ENCODE measurements at regions of chr13 and their contacts with region 1.

Region 1: DNA sequence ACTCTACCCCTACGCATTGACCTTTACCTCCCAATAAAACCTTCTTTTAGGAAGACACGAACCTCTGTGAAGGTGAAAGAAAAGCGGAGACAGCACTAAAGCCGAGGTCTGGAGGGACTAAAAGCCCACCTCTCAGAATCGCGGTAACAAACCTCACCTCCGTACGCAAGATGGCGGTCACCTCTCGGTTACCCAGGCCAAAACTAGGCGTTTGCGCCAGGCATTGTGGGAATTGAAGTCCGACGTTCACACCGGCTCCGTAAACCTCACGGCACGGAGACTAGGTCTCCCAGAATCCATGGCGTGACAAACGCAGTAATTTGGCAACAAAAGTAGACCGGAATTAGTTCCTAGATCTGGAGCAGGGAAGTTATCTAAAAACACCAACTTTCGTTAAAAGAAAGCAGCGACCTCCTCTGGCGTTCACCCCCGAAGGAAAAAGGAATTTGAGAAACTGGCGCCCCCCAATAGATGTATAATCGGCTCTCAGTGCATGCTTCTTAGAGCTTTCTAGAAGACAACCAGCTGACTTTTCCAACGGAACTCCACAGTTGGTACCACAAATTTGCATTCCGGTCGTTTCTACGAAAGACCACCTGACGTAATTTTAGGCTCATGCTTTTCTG is at the start of gene N4BP2L2:
- DNase-seq: peak; percentile 82 to 97 (median 88)
- ATAC-seq: peak; percentile 96
- H3K4me3 ChIP-seq: peak within 1 kb of the TSS; percentile 81
- H3K4me3 Mint-ChIP-seq: peak within 1 kb of the TSS; percentile 100
- H3K27ac ChIP-seq: peak within 1 kb of the TSS; percentile 98
- H3K27ac Mint-ChIP-seq: peak within 1 kb of the TSS; percentile 100
- H3K4me1 ChIP-seq: peaks cover 18% of the 10 kb centered on the region
- H3K4me1 Mint-ChIP-seq: peaks cover 55% of the 10 kb centered on the region
- H3K27me3 ChIP-seq: no peaks in the 10 kb centered on the region
- H3K27me3 Mint-ChIP-seq: peaks cover 5% of the 10 kb centered on the region
- CTCF ChIP-seq: peak; percentile 33
- total RNA-seq, gene N4BP2L2: 171 TPM

Region 2: GRCh38 chr13:32417995-32418394 is 120.7 kb before region 1 on chr13:
- CTCF ChIA-PET with region 1: no interaction called
- POLR2A ChIA-PET with region 1: no interaction called
- intact Hi-C with region 1: no loop called
- DNase-seq: no peak
- ATAC-seq: no peak
- H3K4me3 ChIP-seq: no peak overlapping the region
- H3K4me3 Mint-ChIP-seq: no peak overlapping the region
- H3K27ac ChIP-seq: no peak overlapping the region
- H3K27ac Mint-ChIP-seq: no peak overlapping the region
- H3K4me1 ChIP-seq: no peaks in the 10 kb centered on the region
- H3K4me1 Mint-ChIP-seq: peaks cover 13% of the 10 kb centered on the region
- H3K27me3 ChIP-seq: no peaks in the 10 kb centered on the region
- H3K27me3 Mint-ChIP-seq: no peaks in the 10 kb centered on the region
- CTCF ChIP-seq: no peak

Region 3: DNA sequence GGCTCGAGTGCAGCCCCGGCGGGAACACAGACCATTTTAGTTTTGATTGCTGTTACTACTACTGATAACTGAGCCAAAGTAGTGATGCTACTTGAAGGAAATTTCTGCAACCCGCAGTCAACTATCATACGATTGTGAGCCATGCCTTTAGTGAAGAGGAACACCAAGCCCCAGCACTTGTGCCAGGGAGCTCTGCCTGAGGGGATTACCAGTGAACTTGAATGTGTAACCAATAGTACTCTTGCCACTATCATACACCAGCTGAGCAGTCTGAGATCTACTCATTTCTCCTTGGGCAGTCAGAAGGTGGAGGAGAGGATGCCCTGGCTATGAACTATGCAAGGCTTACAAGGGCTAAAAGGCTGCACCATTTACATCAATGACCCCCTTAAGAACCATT is 61.8 kb before region 1 on chr13:
- CTCF ChIA-PET with region 1: no interaction called
- POLR2A ChIA-PET with region 1: no interaction called
- intact Hi-C with region 1: no loop called
- DNase-seq: no peak
- ATAC-seq: no peak
- H3K4me3 ChIP-seq: no peak overlapping the region
- H3K4me3 Mint-ChIP-seq: no peak overlapping the region
- H3K27ac ChIP-seq: no peak overlapping the region
- H3K27ac Mint-ChIP-seq: no peak overlapping the region
- H3K4me1 ChIP-seq: peaks cover 2% of the 10 kb centered on the region
- H3K4me1 Mint-ChIP-seq: peaks cover 6% of the 10 kb centered on the region
- H3K27me3 ChIP-seq: no peaks in the 10 kb centered on the region
- H3K27me3 Mint-ChIP-seq: no peaks in the 10 kb centered on the region
- CTCF ChIP-seq: no peak

Region 4: GRCh38 chr13:32581177-32581786 is 42.5 kb after region 1 on chr13:
- CTCF ChIA-PET with region 1: interaction called, 16 read pairs
- POLR2A ChIA-PET with region 1: interaction called, 35 read pairs
- intact Hi-C with region 1: loop called (anchors 1 kb)
- DNase-seq: peak in 4 of 14 experiments; percentile 3 to 49 (median 39)
- ATAC-seq: no peak
- H3K4me3 ChIP-seq: no peak overlapping the region
- H3K4me3 Mint-ChIP-seq: no peak overlapping the region
- H3K27ac ChIP-seq: no peak overlapping the region
- H3K27ac Mint-ChIP-seq: no peak overlapping the region
- H3K4me1 ChIP-seq: peaks cover 7% of the 10 kb centered on the region
- H3K4me1 Mint-ChIP-seq: peaks cover 9% of the 10 kb centered on the region
- H3K27me3 ChIP-seq: no peaks in the 10 kb centered on the region
- H3K27me3 Mint-ChIP-seq: no peaks in the 10 kb centered on the region
- CTCF ChIP-seq: peak; percentile 74

Region 5: DNA sequence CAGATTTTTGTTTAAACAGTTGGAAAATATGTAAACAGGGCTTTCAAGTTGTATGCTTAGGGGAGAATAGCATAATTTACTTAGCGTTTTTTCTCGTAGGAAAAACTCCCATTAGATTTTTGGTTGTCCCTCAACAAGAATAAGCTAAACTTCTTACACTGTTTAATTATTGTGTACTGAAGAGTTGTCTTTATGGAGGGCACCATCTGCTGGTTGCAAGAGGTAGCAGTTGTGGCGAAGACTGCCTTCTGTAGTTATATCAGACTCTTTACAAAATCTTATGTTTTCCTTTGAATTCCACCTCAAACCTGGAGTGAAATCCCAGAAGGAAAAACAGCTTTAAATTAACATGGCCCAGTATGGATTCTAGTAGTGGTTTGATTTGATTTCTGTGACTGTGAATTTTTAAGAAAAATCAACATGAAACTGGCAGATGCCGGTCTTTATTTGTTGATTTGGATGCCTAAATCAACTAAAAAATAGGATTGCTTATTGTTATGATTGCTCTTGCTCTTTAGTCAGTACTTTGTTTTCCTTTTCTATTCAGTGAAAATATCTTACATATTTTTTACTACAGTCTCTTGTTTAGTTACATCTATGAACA is 100.9 kb after region 1 on chr13:
- CTCF ChIA-PET with region 1: interaction called, 4 read pairs
- POLR2A ChIA-PET with region 1: interaction called, 3 read pairs
- intact Hi-C with region 1: loop called in 1 of 2 experiments (anchors 5 kb)
- DNase-seq: peak; percentile 22 to 82 (median 36)
- ATAC-seq: peak; percentile 98
- H3K4me3 ChIP-seq: no peak overlapping the region
- H3K4me3 Mint-ChIP-seq: no peak overlapping the region
- H3K27ac ChIP-seq: no peak overlapping the region
- H3K27ac Mint-ChIP-seq: no peak overlapping the region
- H3K4me1 ChIP-seq: no peaks in the 10 kb centered on the region
- H3K4me1 Mint-ChIP-seq: peaks cover 35% of the 10 kb centered on the region
- H3K27me3 ChIP-seq: no peaks in the 10 kb centered on the region
- H3K27me3 Mint-ChIP-seq: no peaks in the 10 kb centered on the region
- CTCF ChIP-seq: peak; percentile 88

Region 6: DNA sequence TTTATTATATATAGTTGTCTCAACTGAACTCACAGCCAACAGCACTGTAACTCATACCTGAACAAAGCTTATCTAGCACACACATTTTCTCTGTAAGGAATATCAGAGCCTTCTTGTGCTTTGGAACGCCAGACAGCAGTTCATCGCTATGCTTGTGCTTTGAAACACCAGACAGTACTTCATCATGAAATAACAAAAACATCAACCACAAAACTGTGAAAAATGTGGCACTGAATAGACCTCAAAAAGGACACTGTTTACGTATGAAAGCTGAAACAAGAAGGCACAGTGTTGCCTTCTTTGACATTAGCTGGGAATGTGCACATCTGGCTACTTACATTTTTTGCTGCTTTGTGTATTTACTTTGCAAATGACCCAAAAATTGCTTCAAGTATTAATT is 207.7 kb after region 1 on chr13:
- CTCF ChIA-PET with region 1: no interaction called
- POLR2A ChIA-PET with region 1: no interaction called
- intact Hi-C with region 1: no loop called
- DNase-seq: peak in 1 of 14 experiments; percentile 24
- ATAC-seq: no peak
- H3K4me3 ChIP-seq: no peak overlapping the region
- H3K4me3 Mint-ChIP-seq: no peak overlapping the region
- H3K27ac ChIP-seq: no peak overlapping the region
- H3K27ac Mint-ChIP-seq: no peak overlapping the region
- H3K4me1 ChIP-seq: no peaks in the 10 kb centered on the region
- H3K4me1 Mint-ChIP-seq: peaks cover 4% of the 10 kb centered on the region
- H3K27me3 ChIP-seq: no peaks in the 10 kb centered on the region
- H3K27me3 Mint-ChIP-seq: no peaks in the 10 kb centered on the region
- CTCF ChIP-seq: no peak

Region 7: GRCh38 chr13:33817901-33818706 is 1279.4 kb after region 1 on chr13 and contains the start of gene RFC3:
- CTCF ChIA-PET with region 1: no interaction called
- POLR2A ChIA-PET with region 1: no interaction called
- intact Hi-C with region 1: loop called (anchors 5 to 10 kb)
- DNase-seq: peak; percentile 81 to 95 (median 85)
- ATAC-seq: peak; percentile 89
- H3K4me3 ChIP-seq: peak within 1 kb of the TSS; percentile 78
- H3K4me3 Mint-ChIP-seq: peak within 1 kb of the TSS; percentile 95
- H3K27ac ChIP-seq: peak within 1 kb of the TSS; percentile 37 to 57
- H3K27ac Mint-ChIP-seq: peak within 1 kb of the TSS; percentile 86
- H3K4me1 ChIP-seq: peaks cover 9% of the 10 kb centered on the region
- H3K4me1 Mint-ChIP-seq: peaks cover 14% of the 10 kb centered on the region
- H3K27me3 ChIP-seq: no peaks in the 10 kb centered on the region
- H3K27me3 Mint-ChIP-seq: no peaks in the 10 kb centered on the region
- CTCF ChIP-seq: no peak
- total RNA-seq, gene RFC3: 4.5 TPM